Calu3 (cell line): ENCODE measurements at regions of chr16 and their contacts with region 1.

Region 1: DNA sequence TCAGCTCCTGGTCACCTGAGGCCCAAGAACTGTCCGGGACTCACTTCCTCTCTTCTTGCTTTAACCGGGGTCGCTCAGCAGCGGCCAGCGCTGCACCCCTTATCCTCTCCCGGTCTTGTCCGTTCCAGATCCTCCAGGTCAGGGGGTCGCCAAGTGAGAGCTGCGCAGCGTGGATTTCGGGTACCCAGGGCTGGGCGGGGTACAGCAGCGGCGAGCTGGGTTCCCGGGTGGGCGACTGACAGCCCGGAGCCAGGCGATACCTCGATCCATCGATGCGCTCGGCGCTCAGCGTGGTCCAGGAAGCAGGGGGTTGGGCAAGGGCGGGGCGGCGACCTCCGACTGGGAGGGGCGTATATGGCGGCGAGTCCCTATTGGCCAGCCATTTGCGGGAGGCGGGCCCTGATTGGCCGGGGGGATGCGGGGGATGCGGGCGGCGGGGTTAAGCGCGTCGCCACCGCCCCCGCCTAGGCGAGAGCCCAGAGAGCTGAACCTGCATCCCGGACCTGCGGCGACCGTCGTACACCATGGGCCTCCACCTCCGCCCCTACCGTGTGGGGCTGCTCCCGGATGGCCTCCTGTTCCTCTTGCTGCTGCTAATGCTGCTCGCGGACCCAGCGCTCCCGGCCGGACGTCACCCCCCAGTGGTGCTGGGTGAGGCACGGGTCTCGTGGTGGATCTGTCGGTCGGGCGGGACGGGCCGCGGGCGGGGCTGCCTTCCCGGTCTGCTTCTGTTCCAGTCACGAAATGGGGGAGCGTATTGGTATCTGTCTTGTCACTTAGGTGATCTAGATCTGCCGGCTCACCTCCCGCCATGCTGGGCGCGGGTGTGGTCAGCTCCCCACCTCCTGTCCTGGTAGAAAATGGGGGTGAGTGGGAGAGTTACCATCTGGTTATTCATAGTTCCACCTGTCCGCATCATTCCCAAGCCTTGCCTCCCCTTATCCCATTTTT is at the start of gene PLA2G15:
- DNase-seq: peak; percentile 97
- H3K4me3 Mint-ChIP-seq: peak within 1 kb of the TSS; percentile 93
- H3K27ac Mint-ChIP-seq: peak within 1 kb of the TSS; percentile 43
- H3K4me1 Mint-ChIP-seq: peaks cover 25% of the 10 kb centered on the region
- H3K27me3 Mint-ChIP-seq: no peaks in the 10 kb centered on the region
- CTCF ChIP-seq: no peak
- total RNA-seq, gene PLA2G15: 16.9 and 22.5 TPM in 2 replicates

Region 2: DNA sequence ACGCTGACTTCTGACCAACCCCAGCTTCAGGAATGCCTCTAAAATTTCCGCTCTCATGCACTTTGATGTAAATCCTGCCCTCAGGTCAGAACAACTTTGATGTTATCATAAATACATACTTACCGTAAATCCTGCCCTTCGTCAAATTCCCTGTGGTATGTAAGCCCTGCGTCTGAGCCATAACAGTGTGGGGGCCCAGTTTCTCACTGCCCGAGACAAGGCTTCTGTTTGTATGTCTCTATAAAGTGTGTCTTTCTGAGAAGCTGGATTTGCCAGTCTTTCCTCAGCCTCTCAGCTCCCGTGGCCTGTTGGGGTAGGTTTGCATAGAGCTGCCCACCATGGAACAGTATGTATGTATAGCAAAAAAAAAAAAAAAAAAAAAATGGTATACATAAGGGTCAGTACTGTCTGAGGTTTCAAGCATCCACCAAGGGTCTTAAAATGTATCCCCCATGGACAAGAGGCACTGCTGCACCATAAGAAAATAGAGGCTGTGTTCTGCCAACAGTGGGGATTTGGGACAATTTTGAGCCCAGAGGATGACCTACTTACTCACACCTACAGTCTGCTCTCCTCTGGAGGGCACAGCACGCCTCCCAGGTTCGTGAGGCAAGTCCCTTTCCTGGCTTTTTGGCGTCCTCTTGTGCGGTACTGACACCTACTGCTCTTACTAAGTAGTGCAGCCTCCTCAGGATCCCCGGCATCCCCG is 83.1 kb after region 1 on chr16:
- CTCF ChIA-PET with region 1: no interaction called
- intact Hi-C with region 1: loop called (anchors 1 kb)
- DNase-seq: peak; percentile 85
- H3K4me3 Mint-ChIP-seq: no peak overlapping the region
- H3K27ac Mint-ChIP-seq: no peak overlapping the region
- H3K4me1 Mint-ChIP-seq: no peaks in the 10 kb centered on the region
- H3K27me3 Mint-ChIP-seq: no peaks in the 10 kb centered on the region
- CTCF ChIP-seq: peak; percentile 93